Activated CD8-positive, alpha-beta memory T cell treated with anti-CD3 and anti-CD28 coated beads, Interleukin-2, amount 10 ng/mL, durations not matched to agents 7 days and 5 days (primary cell): ENCODE measurements at regions of chr20 and their contacts with region 1.

Region 1: GRCh38 chr20:50189681-50190582 is 698 bp upstream of the CEBPB start:
- DNase-seq: peak; percentile 90
- ATAC-seq: peak; percentile 59
- H3K4me3 Mint-ChIP-seq: peak overlapping the region; percentile 20
- H3K27ac Mint-ChIP-seq: peak overlapping the region; percentile 36
- H3K4me1 Mint-ChIP-seq: peaks cover 20% of the 10 kb centered on the region
- H3K27me3 Mint-ChIP-seq: peaks cover 11% of the 10 kb centered on the region

Region 2: DNA sequence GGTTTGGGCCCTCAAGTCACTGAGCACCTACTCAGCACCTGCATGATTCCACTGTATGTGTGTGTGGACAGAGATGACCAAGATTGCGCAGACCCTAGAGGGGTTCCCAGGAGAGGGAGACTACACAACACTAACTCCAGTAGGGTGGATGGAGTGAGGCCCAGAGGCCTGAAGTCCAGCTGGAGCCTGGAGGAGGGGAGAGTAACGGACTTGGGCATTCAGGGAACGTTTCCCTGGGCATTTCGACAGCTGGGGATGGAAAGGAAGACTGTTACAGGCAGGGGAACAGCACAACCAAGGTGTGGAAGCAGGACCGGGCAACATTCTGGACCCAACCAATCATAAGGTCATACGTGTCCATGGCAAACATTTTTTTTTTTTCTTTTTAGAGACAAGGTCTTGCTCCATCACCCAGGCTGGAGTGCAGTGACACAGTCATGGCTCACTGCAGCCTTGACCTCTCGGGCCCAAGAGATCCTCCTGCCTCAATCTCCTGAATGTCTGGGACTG is 10.4 kb before region 1 on chr20:
- CTCF ChIA-PET with region 1: interaction called, 26 read pairs
- DNase-seq: no peak
- ATAC-seq: no peak
- H3K4me3 Mint-ChIP-seq: no peak overlapping the region
- H3K27ac Mint-ChIP-seq: no peak overlapping the region
- H3K4me1 Mint-ChIP-seq: no peaks in the 10 kb centered on the region
- H3K27me3 Mint-ChIP-seq: peaks cover 12% of the 10 kb centered on the region

Region 3: DNA sequence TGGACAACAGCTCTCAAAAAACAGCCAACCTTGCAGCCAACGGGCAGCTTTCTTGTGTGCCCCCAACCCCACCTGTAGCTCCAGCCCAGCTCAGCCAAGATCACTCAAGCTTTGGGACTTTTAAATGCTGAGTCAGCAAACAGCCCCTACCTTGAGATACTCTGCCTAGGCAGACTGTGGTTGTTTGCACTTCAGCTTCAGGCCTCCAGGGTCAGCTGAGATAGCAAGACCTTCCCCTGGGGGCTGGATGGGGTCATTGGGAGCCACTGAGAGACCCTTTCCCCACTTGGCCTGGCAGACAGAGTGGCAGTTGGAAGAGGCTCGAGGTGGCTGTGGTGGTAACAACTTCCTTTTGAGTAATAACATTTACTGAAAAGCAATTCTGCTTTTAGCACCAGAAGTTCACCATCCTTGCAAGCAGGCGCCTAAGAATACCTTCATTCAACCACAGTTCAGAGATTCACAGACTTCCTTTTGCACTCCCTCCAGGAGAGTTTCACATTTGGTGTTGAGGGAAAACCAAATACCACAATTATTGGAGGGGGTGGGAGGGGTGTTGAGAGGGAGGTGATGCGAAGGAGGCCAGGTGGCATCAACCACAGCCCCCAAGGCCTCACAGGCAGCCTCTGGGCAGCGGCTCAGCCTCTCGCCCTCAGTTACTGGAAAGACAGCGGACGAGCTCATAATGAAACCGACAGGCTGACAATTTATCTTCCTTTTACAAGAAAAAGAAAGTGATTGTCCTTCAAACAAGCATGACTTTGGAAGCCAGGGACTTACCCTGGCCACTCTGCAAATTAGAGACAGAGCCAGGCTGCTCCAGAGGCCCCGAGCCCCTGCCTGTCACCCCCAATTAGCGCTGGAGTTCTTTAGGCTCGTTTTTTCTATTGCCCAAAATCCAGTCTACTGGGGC is 148.8 kb after region 1 on chr20:
- CTCF ChIA-PET with region 1: interaction called, 12 read pairs
- DNase-seq: peak; percentile 93
- ATAC-seq: peak; percentile 82
- H3K4me3 Mint-ChIP-seq: peak overlapping the region; percentile 22
- H3K27ac Mint-ChIP-seq: peak overlapping the region; percentile 90
- H3K4me1 Mint-ChIP-seq: peaks cover 58% of the 10 kb centered on the region
- H3K27me3 Mint-ChIP-seq: peaks cover 14% of the 10 kb centered on the region

Region 4: DNA sequence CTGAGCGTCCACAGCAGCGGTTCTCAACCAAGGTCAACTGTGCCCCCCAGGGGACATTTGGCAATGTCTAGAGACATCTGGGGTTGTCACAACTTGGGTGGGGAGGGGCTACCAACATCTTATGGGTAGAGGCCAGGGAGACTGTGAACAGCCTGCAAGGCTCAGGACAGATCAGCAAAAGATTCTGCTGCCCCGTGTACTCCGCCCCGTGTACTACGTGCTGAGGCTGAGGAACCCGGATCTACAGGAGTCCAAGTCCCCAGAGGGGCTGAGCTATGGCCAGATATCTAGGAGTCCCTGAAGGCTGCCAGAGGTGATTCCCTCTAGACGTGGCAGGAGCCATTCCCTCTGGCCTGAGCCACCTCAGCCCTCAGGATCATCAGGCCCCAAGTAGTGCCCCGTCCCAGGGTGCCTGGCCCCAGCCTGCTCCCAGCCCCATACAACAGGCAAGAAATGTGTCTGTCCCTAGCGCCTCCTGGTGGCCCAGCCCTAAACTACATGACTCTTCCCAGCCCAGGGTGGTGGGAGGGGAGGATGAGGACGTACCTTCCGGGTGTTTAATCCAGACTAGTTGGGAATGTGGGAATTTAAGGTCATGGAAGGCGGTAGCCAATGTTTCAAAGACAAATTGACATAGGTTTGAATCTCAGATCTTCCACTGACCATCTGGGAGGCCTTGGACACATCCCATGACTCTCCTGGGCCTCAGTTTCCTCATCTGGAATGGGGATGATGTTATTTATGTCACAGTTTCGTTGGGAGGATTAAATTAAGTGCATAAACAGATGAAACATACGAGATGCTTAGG is 270.7 kb after region 1 on chr20:
- CTCF ChIA-PET with region 1: interaction called, 154 read pairs
- DNase-seq: peak; percentile 87
- ATAC-seq: peak; percentile 88
- H3K4me3 Mint-ChIP-seq: no peak overlapping the region
- H3K27ac Mint-ChIP-seq: no peak overlapping the region
- H3K4me1 Mint-ChIP-seq: peaks cover 24% of the 10 kb centered on the region
- H3K27me3 Mint-ChIP-seq: peaks cover 27% of the 10 kb centered on the region